ENCODE measurements at regions of chr1 and their contacts with region 1.

Region 1: GRCh38 chr1:248196965-248197364 is at the start of gene OR2M3:
- DNase-seq: no peak
- ATAC-seq: no peak
- H3K4me3 ChIP-seq: no peak within 1 kb of the TSS
- H3K27ac ChIP-seq: no peak within 1 kb of the TSS
- H3K4me1 ChIP-seq: no peaks in the 10 kb centered on the region
- H3K27me3 ChIP-seq: no peaks in the 10 kb centered on the region
- CTCF ChIP-seq: no peak
- total RNA-seq, gene OR2M3: not detected in 2 replicates

Region 2: DNA sequence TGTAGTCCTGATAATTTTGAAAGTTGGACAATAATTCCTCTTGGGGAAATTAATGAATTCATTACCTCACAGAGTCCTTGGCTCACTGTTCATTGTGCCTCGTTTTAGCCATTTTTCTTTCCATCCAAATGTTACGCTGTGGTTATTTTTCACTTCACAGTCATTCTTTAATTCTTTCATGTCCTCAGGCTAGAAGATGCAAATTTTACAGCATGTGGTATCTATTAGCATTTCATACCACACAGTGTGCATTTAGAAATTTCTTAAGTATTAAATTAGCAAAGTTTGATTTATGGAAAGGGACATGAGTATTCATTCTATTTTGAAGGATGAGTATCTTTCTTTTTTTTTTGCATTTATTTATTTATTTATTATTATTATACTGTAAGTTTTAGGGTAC is 131.9 kb before region 1 on chr1:
- CTCF ChIA-PET with region 1: no interaction called
- POLR2A ChIA-PET with region 1: no interaction called
- intact Hi-C with region 1: no loop called
- DNase-seq: no peak
- ATAC-seq: no peak
- H3K4me3 ChIP-seq: no peak overlapping the region
- H3K27ac ChIP-seq: no peak overlapping the region
- H3K4me1 ChIP-seq: peaks cover 6% of the 10 kb centered on the region; the same call in 1 of the 2 replicates
- H3K27me3 ChIP-seq: no peaks in the 10 kb centered on the region
- CTCF ChIP-seq: no peak

Region 3: GRCh38 chr1:248155927-248156326 is 41.0 kb before region 1 on chr1:
- CTCF ChIA-PET with region 1: no interaction called
- POLR2A ChIA-PET with region 1: no interaction called
- intact Hi-C with region 1: loop called (anchors 10 kb)
- DNase-seq: no peak
- ATAC-seq: no peak
- H3K4me3 ChIP-seq: no peak overlapping the region
- H3K27ac ChIP-seq: no peak overlapping the region
- H3K4me1 ChIP-seq: peaks cover 9% of the 10 kb centered on the region
- H3K27me3 ChIP-seq: no peaks in the 10 kb centered on the region
- CTCF ChIP-seq: no peak